ENCODE measurements at regions of chr6 and their contacts with region 1.

Region 1: DNA sequence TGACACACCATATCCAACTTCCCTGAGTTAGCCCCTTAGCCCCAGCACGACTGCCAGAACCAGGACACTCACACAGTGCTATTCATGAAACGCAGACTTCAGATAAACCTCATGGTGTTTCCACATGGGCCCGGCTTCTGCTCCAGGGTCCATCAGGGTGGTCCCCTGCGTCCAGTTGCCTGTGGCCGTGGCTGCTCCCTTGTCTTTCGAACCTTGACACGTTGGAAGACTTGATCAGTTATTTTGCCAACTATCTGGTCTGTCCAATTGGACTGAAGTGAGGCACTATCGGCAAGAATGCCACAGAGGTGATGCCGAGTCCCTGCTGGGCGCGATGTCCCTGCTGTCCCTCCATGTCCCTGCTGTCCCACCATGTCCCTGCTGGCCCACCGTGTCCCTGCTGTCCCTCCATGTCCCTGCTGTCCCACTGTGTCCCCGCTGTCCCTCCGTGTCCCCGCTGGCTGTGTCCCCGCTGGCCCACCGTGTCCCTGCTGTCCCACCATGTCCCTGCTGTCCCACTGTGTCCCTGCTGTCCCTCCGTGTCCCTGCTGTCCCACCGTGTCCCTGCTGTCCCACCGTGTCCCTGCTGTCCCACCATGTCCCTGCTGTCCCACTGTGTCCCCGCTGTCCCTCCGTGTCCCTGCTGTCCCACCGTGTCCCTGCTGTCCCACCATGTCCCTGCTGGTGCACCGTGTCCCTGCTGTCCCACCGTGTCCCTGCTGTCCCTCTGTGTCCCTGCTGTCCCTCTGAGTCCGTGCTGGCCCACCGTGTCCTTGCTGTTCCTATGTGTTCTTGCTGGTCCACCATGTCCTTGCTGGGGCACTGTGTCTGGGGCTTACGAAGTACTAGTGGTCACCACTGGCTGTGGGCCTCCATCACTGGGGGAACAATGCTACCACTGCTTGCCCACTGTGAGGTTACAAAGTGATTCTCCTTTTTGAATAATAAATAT is 251.4 kb downstream of the DLL1 start:
- DNase-seq: peak in 3 of 5 donors; percentile 1 to 28 (median 20)
- ATAC-seq: no peak
- H3K4me3 ChIP-seq: no peak overlapping the region
- H3K27ac ChIP-seq: no peak overlapping the region
- H3K4me1 ChIP-seq: peaks cover 0 to 31% (median 12%) of the 10 kb centered on the region in 12 donors
- H3K27me3 ChIP-seq: no peaks in the 10 kb centered on the region
- CTCF ChIP-seq: no peak
- POLR2A ChIP-seq: no peak

Region 2: DNA sequence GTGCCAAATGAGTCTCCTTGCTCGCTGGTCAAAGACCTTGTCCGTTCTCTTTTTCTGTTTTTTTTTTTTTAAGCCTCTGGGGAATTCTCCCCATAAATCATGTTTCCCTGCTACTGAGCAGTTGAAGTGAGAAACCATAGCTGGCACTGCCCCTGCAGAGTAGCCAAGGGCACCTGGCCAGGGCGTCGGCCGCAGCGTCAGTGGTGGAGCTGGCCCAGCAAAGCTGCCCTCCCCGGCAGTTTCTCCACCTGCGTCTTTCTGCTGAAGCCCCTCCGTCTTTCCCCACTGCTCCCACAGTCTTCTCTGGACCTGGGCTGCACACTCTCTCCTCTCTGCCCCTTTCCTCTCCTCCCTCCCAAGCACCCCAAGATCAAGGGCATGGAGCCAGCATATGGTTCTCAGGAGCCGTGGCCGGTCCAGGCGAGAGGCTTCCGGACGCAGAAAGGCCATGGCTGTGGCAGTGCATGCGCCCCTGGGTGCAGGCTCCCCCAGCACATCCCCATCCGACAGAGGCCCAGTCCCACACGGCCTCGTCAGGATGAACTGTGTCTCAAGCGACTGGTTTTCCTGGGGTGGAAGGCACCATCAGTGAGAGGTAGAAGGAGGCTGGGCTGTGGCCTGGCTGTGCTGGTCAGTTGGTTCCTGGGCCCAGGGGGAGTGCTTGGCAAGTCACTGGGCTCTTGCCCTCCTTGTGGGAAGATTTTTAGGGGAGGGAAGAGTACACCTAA is 69.9 kb before region 1 on chr6:
- intact Hi-C with region 1: loop called in 1 of 10 experiments (anchors 5 kb)
- DNase-seq: peak in 1 of 5 donors; percentile 4
- ATAC-seq: no peak
- H3K4me3 ChIP-seq: no peak overlapping the region
- H3K27ac ChIP-seq: no peak overlapping the region
- H3K4me1 ChIP-seq: no peaks in the 10 kb centered on the region
- H3K27me3 ChIP-seq: no peaks in the 10 kb centered on the region
- CTCF ChIP-seq: no peak
- POLR2A ChIP-seq: no peak

Region 3: GRCh38 chr6:170011204-170012036 is 28.0 kb before region 1 on chr6:
- intact Hi-C with region 1: loop called in 1 of 10 experiments (anchors 1 kb)
- DNase-seq: peak; percentile 56 to 90 (median 79)
- ATAC-seq: peak; percentile 94 to 96 (median 95)
- H3K4me3 ChIP-seq: no peak overlapping the region
- H3K27ac ChIP-seq: peak overlapping the region; percentile 1 to 86 (median 53)
- H3K4me1 ChIP-seq: peaks cover 0 to 24% (median 16%) of the 10 kb centered on the region in 12 donors
- H3K27me3 ChIP-seq: peaks cover 0 to 4% (median 0%) of the 10 kb centered on the region in 9 donors
- CTCF ChIP-seq: peak in 3 of 12 donors; percentile 8 to 27 (median 12)
- POLR2A ChIP-seq: no peak

Region 4: DNA sequence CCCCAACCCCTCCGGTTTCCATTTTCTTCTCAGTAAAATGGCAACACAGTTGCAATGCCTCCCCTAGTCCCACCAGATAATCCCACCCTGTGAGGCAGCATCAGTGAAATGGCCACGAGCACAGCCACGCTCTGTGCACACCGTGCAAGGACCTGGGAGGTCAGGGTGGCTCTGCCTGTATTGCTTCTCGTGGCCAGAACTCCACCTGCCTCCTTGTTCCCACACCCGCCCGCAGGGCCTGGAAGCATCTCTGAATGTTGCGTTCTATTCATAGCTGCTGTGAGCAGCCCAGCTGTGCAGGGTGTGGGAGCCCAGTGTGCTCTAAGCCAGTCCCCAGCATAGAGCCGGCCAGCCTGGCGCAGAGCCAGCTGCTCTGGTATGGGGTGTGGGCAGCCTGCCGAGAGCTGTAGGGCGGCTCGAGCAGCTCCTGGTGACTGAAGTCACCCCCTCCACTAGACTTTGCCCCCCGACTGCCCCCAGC is 90.3 kb after region 1 on chr6:
- intact Hi-C with region 1: loop called in 5 of 10 experiments (anchors 5 kb)
- DNase-seq: peak; percentile 69 to 94 (median 86)
- ATAC-seq: peak; percentile 89 to 93 (median 90)
- H3K4me3 ChIP-seq: no peak overlapping the region
- H3K27ac ChIP-seq: peak overlapping the region in 8 of 12 donors; percentile 34 to 72 (median 54)
- H3K4me1 ChIP-seq: peaks cover 0 to 53% (median 22%) of the 10 kb centered on the region in 12 donors
- H3K27me3 ChIP-seq: no peaks in the 10 kb centered on the region
- CTCF ChIP-seq: no peak
- POLR2A ChIP-seq: no peak

Region 5: GRCh38 chr6:170286246-170286933 is 247.0 kb after region 1 on chr6:
- intact Hi-C with region 1: loop called in 6 of 10 experiments (anchors 2 to 10 kb)
- DNase-seq: peak in 2 of 5 donors; percentile 72 to 74
- ATAC-seq: peak; percentile 9 to 31 (median 24)
- H3K4me3 ChIP-seq: peak overlapping the region in 7 of 12 donors; percentile 3 to 95 (median 80)
- H3K27ac ChIP-seq: peak overlapping the region in 8 of 12 donors; percentile 31 to 90 (median 82)
- H3K4me1 ChIP-seq: peaks cover 8 to 58% (median 38%) of the 10 kb centered on the region in 12 donors
- H3K27me3 ChIP-seq: peaks cover 0 to 47% (median 0%) of the 10 kb centered on the region in 9 donors
- CTCF ChIP-seq: no peak
- POLR2A ChIP-seq: no peak

Region 6: GRCh38 chr6:170306324-170307079 is 267.1 kb after region 1 on chr6 and contains the start of gene FAM120B:
- intact Hi-C with region 1: loop called in 1 of 10 experiments (anchors 5 kb)
- DNase-seq: peak; percentile 97 to 99 (median 98)
- ATAC-seq: peak; percentile 98 to 99 (median 99)
- H3K4me3 ChIP-seq: peak within 1 kb of the TSS; percentile 77 to 99 (median 94)
- H3K27ac ChIP-seq: peak within 1 kb of the TSS; percentile 79 to 96 (median 92)
- H3K4me1 ChIP-seq: peaks cover 5 to 50% (median 35%) of the 10 kb centered on the region in 12 donors
- H3K27me3 ChIP-seq: no peaks in the 10 kb centered on the region
- CTCF ChIP-seq: no peak
- POLR2A ChIP-seq: peak; percentile 32 to 95
- total RNA-seq, gene FAM120B: 12.1 to 29.4 (median 19.9) TPM